MCF 10A (cell line): ENCODE measurements at regions of chr11 and their contacts with region 1.

Region 1: GRCh38 chr11:59429924-59430516 is 3.8 kb upstream of the OR5A2 start:
- DNase-seq: peak; percentile 73
- H3K4me3 Mint-ChIP-seq: no peak overlapping the region
- H3K27ac Mint-ChIP-seq: no peak overlapping the region
- H3K4me1 Mint-ChIP-seq: no peaks in the 10 kb centered on the region
- H3K27me3 Mint-ChIP-seq: peaks cover 50% of the 10 kb centered on the region
- CTCF ChIP-seq: peak; percentile 73

Region 2: GRCh38 chr11:59142530-59143507 is 287.2 kb before region 1 on chr11 and contains the start of gene FAM111A:
- CTCF ChIA-PET with region 1: interaction called, 4 read pairs
- POLR2A ChIA-PET with region 1: no interaction called
- intact Hi-C with region 1: loop called (anchors 1 kb)
- DNase-seq: peak; percentile 95
- H3K4me3 Mint-ChIP-seq: peak within 1 kb of the TSS; percentile 97
- H3K27ac Mint-ChIP-seq: peak within 1 kb of the TSS; percentile 98
- H3K4me1 Mint-ChIP-seq: peaks cover 50% of the 10 kb centered on the region
- H3K27me3 Mint-ChIP-seq: no peaks in the 10 kb centered on the region
- CTCF ChIP-seq: peak; percentile 6
- total RNA-seq, gene FAM111A: 26.3 and 27.7 TPM in 2 replicates

Region 3: GRCh38 chr11:59197991-59198390 is 232.0 kb before region 1 on chr11:
- CTCF ChIA-PET with region 1: interaction called, 12 read pairs
- POLR2A ChIA-PET with region 1: no interaction called
- intact Hi-C with region 1: no loop called
- DNase-seq: no peak
- H3K4me3 Mint-ChIP-seq: no peak overlapping the region
- H3K27ac Mint-ChIP-seq: peak overlapping the region; percentile 17
- H3K4me1 Mint-ChIP-seq: peaks cover 14% of the 10 kb centered on the region
- H3K27me3 Mint-ChIP-seq: no peaks in the 10 kb centered on the region
- CTCF ChIP-seq: no peak

Region 4: GRCh38 chr11:59207988-59208451 is 222.0 kb before region 1 on chr11:
- CTCF ChIA-PET with region 1: interaction called, 9 read pairs
- POLR2A ChIA-PET with region 1: no interaction called
- intact Hi-C with region 1: loop called (anchors 1 kb)
- DNase-seq: peak; percentile 59
- H3K4me3 Mint-ChIP-seq: no peak overlapping the region
- H3K27ac Mint-ChIP-seq: no peak overlapping the region
- H3K4me1 Mint-ChIP-seq: peaks cover 11% of the 10 kb centered on the region
- H3K27me3 Mint-ChIP-seq: peaks cover 17% of the 10 kb centered on the region
- CTCF ChIP-seq: peak; percentile 62

Region 5: GRCh38 chr11:59283825-59284772 is 145.9 kb before region 1 on chr11:
- CTCF ChIA-PET with region 1: interaction called, 5 read pairs
- POLR2A ChIA-PET with region 1: no interaction called
- intact Hi-C with region 1: loop called (anchors 2 kb)
- DNase-seq: peak; percentile 67
- H3K4me3 Mint-ChIP-seq: no peak overlapping the region
- H3K27ac Mint-ChIP-seq: no peak overlapping the region
- H3K4me1 Mint-ChIP-seq: peaks cover 7% of the 10 kb centered on the region
- H3K27me3 Mint-ChIP-seq: peaks cover 44% of the 10 kb centered on the region
- CTCF ChIP-seq: peak; percentile 74

Region 6: GRCh38 chr11:59417023-59417422 is 13.0 kb before region 1 on chr11:
- CTCF ChIA-PET with region 1: interaction called, 13 read pairs
- POLR2A ChIA-PET with region 1: no interaction called
- intact Hi-C with region 1: no loop called
- DNase-seq: no peak
- H3K4me3 Mint-ChIP-seq: no peak overlapping the region
- H3K27ac Mint-ChIP-seq: no peak overlapping the region
- H3K4me1 Mint-ChIP-seq: no peaks in the 10 kb centered on the region
- H3K27me3 Mint-ChIP-seq: peaks cover 30% of the 10 kb centered on the region
- CTCF ChIP-seq: no peak

Region 7: DNA sequence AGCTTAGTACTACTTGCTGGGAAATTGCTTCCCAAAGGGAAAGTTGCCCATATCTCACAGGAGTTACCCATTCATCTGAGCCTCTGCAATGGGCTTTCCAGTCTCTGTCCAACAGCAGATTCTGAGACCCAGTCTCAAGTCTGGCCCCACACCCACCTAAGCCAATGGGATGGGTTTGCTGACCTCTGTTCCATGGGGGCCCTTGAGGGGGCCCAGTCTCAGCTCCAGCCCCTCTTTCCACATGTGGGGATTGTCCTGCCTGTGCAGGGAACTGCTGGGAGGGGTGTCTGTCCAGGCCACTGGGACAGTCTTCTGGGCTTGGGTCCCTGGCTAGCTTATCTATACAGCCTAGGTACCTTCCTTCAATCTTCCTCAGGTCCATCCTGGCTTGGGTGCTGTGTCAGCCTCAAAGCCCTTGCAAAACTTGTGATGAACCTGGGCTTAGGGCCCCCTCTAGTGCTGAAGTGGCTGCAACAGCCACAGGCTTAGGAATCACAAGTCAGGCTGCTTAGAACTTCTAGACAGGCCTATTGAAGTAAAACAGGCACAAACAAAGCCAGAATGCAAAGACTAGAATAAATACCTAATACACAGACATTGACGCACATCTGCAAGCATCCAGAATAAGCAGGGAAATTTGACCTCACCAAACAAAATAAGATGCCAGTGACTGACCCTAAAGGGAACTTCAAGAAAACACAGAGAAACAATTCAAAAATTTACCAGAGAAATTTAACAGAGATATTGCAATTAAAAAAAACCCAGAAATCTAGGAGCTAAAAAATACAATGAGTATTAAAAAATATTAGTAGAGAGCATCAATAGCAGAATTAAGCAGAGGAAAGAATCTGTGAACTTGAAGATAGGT is 250.5 kb after region 1 on chr11:
- CTCF ChIA-PET with region 1: no interaction called
- POLR2A ChIA-PET with region 1: no interaction called
- intact Hi-C with region 1: loop called (anchors 1 kb)
- DNase-seq: peak; percentile 76
- H3K4me3 Mint-ChIP-seq: no peak overlapping the region
- H3K27ac Mint-ChIP-seq: no peak overlapping the region
- H3K4me1 Mint-ChIP-seq: no peaks in the 10 kb centered on the region
- H3K27me3 Mint-ChIP-seq: no peaks in the 10 kb centered on the region
- CTCF ChIP-seq: peak; percentile 84

Region 8: GRCh38 chr11:59698506-59698905 is 268.5 kb after region 1 on chr11:
- CTCF ChIA-PET with region 1: no interaction called
- POLR2A ChIA-PET with region 1: no interaction called
- intact Hi-C with region 1: no loop called
- DNase-seq: no peak
- H3K4me3 Mint-ChIP-seq: no peak overlapping the region
- H3K27ac Mint-ChIP-seq: peak overlapping the region; percentile 70
- H3K4me1 Mint-ChIP-seq: peaks cover 7% of the 10 kb centered on the region
- H3K27me3 Mint-ChIP-seq: no peaks in the 10 kb centered on the region
- CTCF ChIP-seq: no peak